Pancreas (tissue), 10 donors: ENCODE measurements at regions of chr17 and their contacts with region 1.

Region 1: GRCh38 chr17:49399995-49400394 is 14.7 kb downstream of the PHB1 start:
- DNase-seq: peak in 1 of 6 donors; percentile 1
- ATAC-seq: no peak
- H3K4me3 ChIP-seq: no peak overlapping the region
- H3K27ac ChIP-seq: no peak overlapping the region
- H3K4me1 ChIP-seq: no peaks in the 10 kb centered on the region
- H3K27me3 ChIP-seq: no peaks in the 10 kb centered on the region
- CTCF ChIP-seq: no peak

Region 2: GRCh38 chr17:49315551-49316257 is 84.3 kb before region 1 on chr17:
- intact Hi-C with region 1: loop called in 2 of 3 experiments (anchors 5 to 10 kb)
- DNase-seq: peak; percentile 58 to 84 (median 63)
- ATAC-seq: peak; percentile 100
- H3K4me3 ChIP-seq: no peak overlapping the region
- H3K27ac ChIP-seq: no peak overlapping the region
- H3K4me1 ChIP-seq: peaks cover 4 to 5% (median 4%) of the 10 kb centered on the region in 3 donors
- H3K27me3 ChIP-seq: no peaks in the 10 kb centered on the region
- CTCF ChIP-seq: peak; percentile 38 to 78 (median 69)

Region 3: DNA sequence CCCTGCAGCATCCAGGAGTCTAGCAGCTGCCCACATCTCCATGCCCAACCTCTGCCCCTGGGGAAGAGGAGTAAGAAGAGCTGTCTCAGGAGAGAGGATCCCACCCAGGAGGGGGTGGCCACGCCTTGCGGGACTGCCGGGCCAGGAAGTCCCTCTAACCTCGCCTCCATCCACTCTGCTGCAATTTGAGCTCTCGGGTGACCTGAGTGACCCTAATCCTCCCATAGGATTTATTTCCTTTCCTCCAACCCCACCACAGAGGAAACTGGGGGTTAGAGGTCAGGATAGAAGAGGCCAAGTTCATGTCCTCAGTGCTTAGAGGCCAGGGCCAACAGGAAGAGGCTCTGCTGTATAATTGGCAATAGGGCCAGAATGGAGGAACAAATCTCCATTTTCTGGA is 72.5 kb after region 1 on chr17:
- intact Hi-C with region 1: no loop called
- DNase-seq: no peak
- ATAC-seq: no peak
- H3K4me3 ChIP-seq: no peak overlapping the region
- H3K27ac ChIP-seq: no peak overlapping the region
- H3K4me1 ChIP-seq: no peaks in the 10 kb centered on the region
- H3K27me3 ChIP-seq: no peaks in the 10 kb centered on the region
- CTCF ChIP-seq: no peak